Activated CD4-positive, alpha-beta memory T cell treated with anti-CD3 and anti-CD28 coated beads, Interleukin-2, amount 10 ng/mL, durations not matched to agents 7 days and 5 days (primary cell): ENCODE measurements at regions of chr21 and their contacts with region 1.

Region 1: GRCh38 chr21:14737922-14738321 is 191.8 kb upstream of the SAMSN1 start:
- DNase-seq: peak; percentile 36
- H3K4me3 Mint-ChIP-seq: no peak overlapping the region
- H3K27ac Mint-ChIP-seq: no peak overlapping the region
- H3K4me1 Mint-ChIP-seq: peaks cover 36% of the 10 kb centered on the region
- H3K27me3 Mint-ChIP-seq: no peaks in the 10 kb centered on the region

Region 2: DNA sequence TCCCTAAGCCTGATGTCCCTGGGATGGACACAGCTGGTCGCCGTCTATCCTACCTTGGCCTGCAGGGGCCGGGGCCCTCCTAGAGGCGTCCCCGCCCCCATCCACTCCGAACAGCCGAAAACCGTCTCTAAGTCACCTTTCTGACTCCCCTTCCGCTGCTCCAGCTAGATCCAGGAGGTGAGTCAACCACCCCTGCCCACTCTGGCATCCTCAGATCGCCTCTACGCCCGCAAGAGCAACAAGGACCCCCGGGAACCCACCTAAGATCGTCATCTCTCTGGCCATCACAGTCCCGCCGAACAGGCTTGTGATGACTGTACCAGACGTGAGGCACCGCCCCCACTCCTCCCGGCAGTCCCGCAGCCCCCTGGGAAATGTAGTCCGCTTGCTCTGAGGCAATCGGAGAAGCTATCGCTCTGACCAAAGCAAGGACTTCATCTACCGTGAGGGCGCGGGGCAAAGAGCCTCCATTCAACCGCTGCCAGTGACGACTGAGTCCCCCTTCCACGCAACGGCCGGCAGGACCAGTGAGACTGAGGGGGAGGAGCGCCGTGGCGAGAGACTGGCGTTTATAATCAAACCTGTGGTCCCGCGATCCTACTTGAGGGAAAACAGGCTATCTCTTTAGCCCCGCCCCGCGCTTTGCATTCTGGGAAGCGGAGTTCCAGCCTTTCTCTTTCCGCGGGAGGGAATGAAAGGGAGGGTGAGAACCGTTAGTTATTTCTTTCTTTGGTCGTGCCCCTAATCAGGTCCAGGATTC is 354.9 kb before region 1 on chr21 and contains the start of gene HSPA13:
- CTCF ChIA-PET with region 1: interaction called, 10 read pairs
- POLR2A ChIA-PET with region 1: interaction called, 3 read pairs
- DNase-seq: peak; percentile 99
- H3K4me3 Mint-ChIP-seq: peak within 1 kb of the TSS; percentile 98
- H3K27ac Mint-ChIP-seq: peak within 1 kb of the TSS; percentile 91
- H3K4me1 Mint-ChIP-seq: peaks cover 48% of the 10 kb centered on the region
- H3K27me3 Mint-ChIP-seq: no peaks in the 10 kb centered on the region
- total RNA-seq, gene HSPA13: 45.5 to 48.5 TPM

Region 3: GRCh38 chr21:14482165-14482564 is 255.8 kb before region 1 on chr21:
- CTCF ChIA-PET with region 1: interaction called, 12 read pairs
- POLR2A ChIA-PET with region 1: interaction called, 4 read pairs
- DNase-seq: peak; percentile 42
- H3K4me3 Mint-ChIP-seq: peak overlapping the region; percentile 19
- H3K27ac Mint-ChIP-seq: peak overlapping the region; percentile 87
- H3K4me1 Mint-ChIP-seq: peaks cover 48% of the 10 kb centered on the region
- H3K27me3 Mint-ChIP-seq: no peaks in the 10 kb centered on the region

Region 4: DNA sequence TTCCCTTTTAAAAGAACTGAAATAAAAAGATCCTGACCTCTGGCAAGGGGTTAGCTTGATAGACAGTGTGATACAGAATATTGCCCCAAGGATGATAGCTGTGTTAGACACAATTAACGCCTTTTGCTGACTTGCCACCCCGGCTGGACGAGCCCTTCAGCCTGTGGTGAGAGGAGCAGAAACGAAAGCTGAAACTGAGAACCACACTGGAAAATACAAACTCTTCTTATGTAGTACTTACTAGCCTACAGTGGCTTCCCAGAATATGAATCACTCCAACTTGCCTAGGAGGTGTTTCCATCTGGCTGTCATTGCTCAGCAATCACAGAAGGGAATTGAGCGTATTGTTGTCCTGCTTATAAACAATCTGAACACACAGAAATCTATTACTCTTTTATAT is 214.7 kb before region 1 on chr21:
- CTCF ChIA-PET with region 1: interaction called, 11 read pairs
- POLR2A ChIA-PET with region 1: interaction called, 9 read pairs
- DNase-seq: peak; percentile 59
- H3K4me3 Mint-ChIP-seq: peak overlapping the region; percentile 60
- H3K27ac Mint-ChIP-seq: peak overlapping the region; percentile 75
- H3K4me1 Mint-ChIP-seq: peaks cover 66% of the 10 kb centered on the region
- H3K27me3 Mint-ChIP-seq: no peaks in the 10 kb centered on the region

Region 5: DNA sequence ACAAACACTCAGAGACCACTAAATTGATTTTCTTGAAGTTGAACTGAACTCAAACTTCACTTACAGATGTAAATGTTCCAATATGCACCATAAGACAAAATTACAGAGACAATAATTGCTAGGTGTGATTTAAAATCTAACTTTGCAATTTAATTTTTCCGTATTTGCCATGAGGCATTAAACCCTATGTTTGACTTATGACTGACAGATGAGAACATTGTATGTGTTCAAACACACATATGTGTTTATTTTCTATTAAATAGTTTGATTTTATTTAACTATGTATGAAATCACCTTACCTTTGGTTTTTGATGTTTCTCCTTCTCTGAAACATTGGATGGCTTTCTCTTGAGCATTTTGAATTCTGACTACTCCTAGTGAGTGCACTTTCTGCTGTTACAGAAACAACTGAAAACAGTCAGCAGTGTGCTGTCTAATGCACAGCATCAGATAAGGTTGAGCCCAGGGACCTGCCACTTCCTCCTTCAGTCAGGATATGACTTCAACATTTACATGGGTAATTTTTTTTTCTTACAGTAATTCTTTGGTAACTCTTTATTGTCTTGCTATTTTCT is 191.9 kb before region 1 on chr21 and contains the start of gene SAMSN1:
- CTCF ChIA-PET with region 1: interaction called, 12 read pairs
- POLR2A ChIA-PET with region 1: interaction called, 13 read pairs
- DNase-seq: peak; percentile 83
- H3K4me3 Mint-ChIP-seq: peak within 1 kb of the TSS; percentile 98
- H3K27ac Mint-ChIP-seq: peak within 1 kb of the TSS; percentile 87
- H3K4me1 Mint-ChIP-seq: peaks cover 62% of the 10 kb centered on the region
- H3K27me3 Mint-ChIP-seq: no peaks in the 10 kb centered on the region
- total RNA-seq, gene SAMSN1: 87.1 to 91.0 TPM

Region 6: DNA sequence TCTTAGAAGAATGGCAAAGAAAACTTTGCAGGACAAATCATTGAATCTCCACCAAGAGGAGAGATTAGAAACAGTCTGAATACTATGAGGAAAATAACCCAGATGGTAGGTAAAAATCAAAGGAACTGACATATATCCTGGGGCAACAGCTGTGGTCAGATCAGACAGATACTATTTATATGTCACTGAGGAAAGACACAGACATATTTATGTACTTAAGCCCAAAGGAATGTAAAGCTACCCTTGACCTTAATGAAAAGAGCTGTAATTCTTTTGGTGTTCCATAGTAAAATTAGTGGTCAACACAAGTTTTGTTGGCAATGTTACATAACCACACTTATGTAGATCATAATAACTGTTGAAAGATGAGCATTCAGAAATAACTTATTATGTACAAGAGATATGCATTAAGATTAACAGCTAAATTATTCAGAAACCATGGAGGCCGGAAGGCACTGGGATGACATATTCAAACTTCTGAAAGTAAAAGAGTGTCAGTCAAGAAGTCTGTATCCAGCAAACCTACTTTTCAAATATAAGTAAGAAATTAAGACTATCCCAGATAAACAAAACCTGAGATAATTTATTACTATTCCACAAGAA is 25.7 kb before region 1 on chr21:
- CTCF ChIA-PET with region 1: no interaction called
- POLR2A ChIA-PET with region 1: no interaction called
- DNase-seq: no peak
- H3K4me3 Mint-ChIP-seq: no peak overlapping the region
- H3K27ac Mint-ChIP-seq: no peak overlapping the region
- H3K4me1 Mint-ChIP-seq: no peaks in the 10 kb centered on the region
- H3K27me3 Mint-ChIP-seq: no peaks in the 10 kb centered on the region